CD4-positive, alpha-beta memory T cell (primary cell): ENCODE measurements at regions of chr13 and their contacts with region 1.

Region 1: DNA sequence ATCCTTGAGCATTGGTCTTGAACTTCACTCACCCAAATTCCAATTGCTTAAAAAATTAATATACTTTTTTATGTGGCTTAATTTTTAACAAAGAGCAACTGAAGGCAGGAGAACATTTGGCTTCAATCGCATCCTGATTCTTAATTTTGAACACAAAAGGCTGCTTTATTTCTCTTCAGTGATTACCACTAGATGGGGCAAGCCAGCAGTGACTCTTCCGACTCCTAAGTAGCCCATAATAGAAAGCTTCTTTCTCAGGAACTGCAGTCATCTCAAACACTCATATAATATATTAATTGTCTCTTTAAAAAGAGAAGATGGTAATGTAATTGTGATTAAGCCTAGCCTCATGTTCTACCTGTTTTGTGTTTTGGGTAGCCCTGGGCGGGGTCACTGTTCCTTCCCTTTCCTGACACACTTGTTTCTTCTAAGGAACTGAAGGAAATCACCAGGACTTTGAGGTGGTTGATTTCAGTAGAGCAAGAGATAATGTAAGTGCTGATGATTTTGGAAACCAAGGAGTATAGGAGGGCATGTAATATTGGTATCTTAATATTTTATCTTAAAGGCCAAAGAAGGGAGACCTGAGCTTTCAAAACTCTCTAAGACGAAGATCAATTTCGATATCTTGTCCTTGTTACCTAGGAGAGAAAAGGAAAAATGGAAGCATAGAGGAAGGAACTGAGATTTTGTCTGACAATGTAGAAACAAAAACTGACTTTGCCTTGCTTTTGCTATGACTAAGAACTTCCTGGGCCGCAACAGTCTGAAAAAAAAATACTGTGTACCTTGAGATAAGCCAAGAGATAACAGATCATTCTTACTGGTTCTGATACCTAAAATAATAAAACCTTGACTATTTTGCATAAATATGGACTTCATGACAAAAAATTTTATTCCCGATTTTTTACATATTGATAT is 73.1 kb downstream of the TNFSF13B start:
- DNase-seq: peak; percentile 18 to 68 (median 40)
- H3K4me3 ChIP-seq: peak overlapping the region in 1 of 2 donors; percentile 13
- H3K4me3 Mint-ChIP-seq: peak overlapping the region; percentile 36 to 89 (median 78)
- H3K27ac ChIP-seq: peak overlapping the region; percentile 15
- H3K27ac Mint-ChIP-seq: peak overlapping the region; percentile 51 to 95 (median 85)
- H3K4me1 ChIP-seq: peaks cover 56% of the 10 kb centered on the region
- H3K4me1 Mint-ChIP-seq: peaks cover 24 to 68% (median 44%) of the 10 kb centered on the region in 4 donors
- H3K27me3 ChIP-seq: no peaks in the 10 kb centered on the region
- H3K27me3 Mint-ChIP-seq: no peaks in the 10 kb centered on the region

Region 2: GRCh38 chr13:108227651-108228272 is 114.9 kb before region 1 on chr13:
- CTCF ChIA-PET with region 1: interaction called, 3 read pairs
- POLR2A ChIA-PET with region 1: no interaction called
- intact Hi-C with region 1: loop called (anchors 1 kb)
- DNase-seq: peak in 4 of 5 donors; percentile 41 to 56 (median 46)
- H3K4me3 ChIP-seq: no peak overlapping the region
- H3K4me3 Mint-ChIP-seq: no peak overlapping the region
- H3K27ac ChIP-seq: no peak overlapping the region
- H3K27ac Mint-ChIP-seq: peak overlapping the region in 1 of 7 donors; percentile 69
- H3K4me1 ChIP-seq: peaks cover 43% of the 10 kb centered on the region
- H3K4me1 Mint-ChIP-seq: peaks cover 41 to 74% (median 60%) of the 10 kb centered on the region in 4 donors
- H3K27me3 ChIP-seq: no peaks in the 10 kb centered on the region
- H3K27me3 Mint-ChIP-seq: no peaks in the 10 kb centered on the region

Region 3: DNA sequence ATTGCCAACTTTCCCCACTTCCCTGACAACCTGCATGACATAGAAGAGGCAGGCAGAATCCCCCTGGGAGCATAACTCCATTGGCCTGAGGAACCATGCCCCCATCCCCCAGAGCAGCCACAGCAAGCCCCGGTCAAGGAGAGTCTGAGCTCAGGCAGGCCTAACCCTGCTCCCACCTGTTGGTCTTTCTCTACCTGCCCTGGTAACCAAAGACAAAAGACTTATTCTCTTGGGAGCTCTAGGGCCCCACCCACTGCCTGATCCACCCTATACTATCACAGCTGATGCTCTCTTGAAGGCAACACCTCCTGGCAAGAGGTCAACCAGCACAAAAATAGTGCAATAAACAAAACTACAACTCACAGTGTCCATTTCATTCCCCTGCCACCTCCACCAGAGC is 13.8 kb before region 1 on chr13:
- CTCF ChIA-PET with region 1: interaction called, 13 read pairs
- POLR2A ChIA-PET with region 1: interaction called, 11 read pairs
- intact Hi-C with region 1: loop called (anchors 1 kb)
- DNase-seq: no peak
- H3K4me3 ChIP-seq: no peak overlapping the region
- H3K4me3 Mint-ChIP-seq: no peak overlapping the region
- H3K27ac ChIP-seq: no peak overlapping the region
- H3K27ac Mint-ChIP-seq: no peak overlapping the region
- H3K4me1 ChIP-seq: peaks cover 16% of the 10 kb centered on the region
- H3K4me1 Mint-ChIP-seq: peaks cover 10 to 42% (median 27%) of the 10 kb centered on the region in 4 donors
- H3K27me3 ChIP-seq: no peaks in the 10 kb centered on the region
- H3K27me3 Mint-ChIP-seq: no peaks in the 10 kb centered on the region

Region 4: DNA sequence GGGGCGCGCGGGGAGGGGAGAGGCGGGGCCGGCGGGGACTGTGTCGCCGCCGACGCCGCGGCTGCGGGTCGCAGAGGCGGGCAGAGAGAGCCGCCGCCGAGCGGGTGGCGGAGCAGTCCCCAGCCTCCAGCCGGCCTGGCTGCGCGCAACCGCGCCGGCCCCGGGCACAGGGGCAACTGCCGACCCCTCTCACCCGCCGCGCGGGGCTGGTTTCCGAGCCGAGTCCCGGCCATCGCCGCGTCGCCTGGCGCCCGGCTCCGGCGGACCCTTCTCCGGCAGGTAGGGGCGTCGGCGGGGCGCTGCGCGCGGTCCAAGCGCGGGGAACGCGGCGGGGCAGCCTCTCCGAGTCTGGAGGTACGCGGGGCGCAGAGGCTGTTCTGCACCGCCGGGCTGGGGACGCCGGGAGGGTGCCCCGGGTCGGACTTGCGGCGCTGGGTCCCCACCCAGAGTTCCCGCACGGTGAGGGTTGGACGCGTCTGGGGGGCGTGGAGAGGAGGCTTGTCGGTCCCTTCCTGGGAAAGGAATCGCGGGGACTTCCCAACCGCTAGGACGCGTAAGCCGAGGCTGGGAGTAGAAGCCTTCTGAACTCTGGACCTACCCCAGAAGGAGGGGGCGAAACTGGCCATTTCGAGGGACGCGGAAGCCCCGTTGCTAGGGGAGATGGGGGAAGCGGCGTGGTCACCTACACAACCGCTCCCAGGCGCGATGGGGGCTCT is 153.2 kb after region 1 on chr13:
- CTCF ChIA-PET with region 1: interaction called, 24 read pairs
- POLR2A ChIA-PET with region 1: interaction called, 25 read pairs
- intact Hi-C with region 1: loop called (anchors 1 kb)
- DNase-seq: peak in 4 of 5 donors; percentile 5 to 44 (median 8)
- H3K4me3 ChIP-seq: peak overlapping the region; percentile 47 to 56
- H3K4me3 Mint-ChIP-seq: peak overlapping the region; percentile 83 to 97 (median 90)
- H3K27ac ChIP-seq: no peak overlapping the region
- H3K27ac Mint-ChIP-seq: peak overlapping the region in 6 of 7 donors; percentile 25 to 89 (median 48)
- H3K4me1 ChIP-seq: peaks cover 20% of the 10 kb centered on the region
- H3K4me1 Mint-ChIP-seq: peaks cover 4 to 39% (median 24%) of the 10 kb centered on the region in 4 donors
- H3K27me3 ChIP-seq: peaks cover 7% of the 10 kb centered on the region
- H3K27me3 Mint-ChIP-seq: peaks cover 7 to 9% of the 10 kb centered on the region in 2 donors

Region 5: DNA sequence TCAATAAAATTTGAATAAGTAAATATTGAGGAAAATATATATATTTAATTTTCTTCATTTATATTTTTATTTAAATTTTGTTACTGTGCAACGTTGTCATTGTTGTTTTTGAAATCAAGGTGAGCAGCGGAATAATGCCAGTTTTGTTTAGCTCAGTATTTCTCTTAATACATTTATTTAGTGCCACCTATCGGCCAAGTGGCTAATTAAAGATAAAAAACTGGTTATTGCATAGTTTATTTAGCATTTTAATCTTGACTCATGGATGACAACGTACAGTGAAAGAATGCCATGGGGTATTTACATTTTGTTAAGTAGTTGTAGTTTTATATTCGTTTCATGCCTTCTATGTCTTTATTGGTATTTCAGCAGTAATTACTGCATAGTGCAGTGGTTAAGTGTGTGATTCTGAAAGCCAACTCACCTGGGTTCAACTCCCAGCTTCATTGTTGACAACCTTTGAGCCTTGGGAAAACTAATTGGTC is 552.6 kb after region 1 on chr13:
- CTCF ChIA-PET with region 1: interaction called, 5 read pairs
- POLR2A ChIA-PET with region 1: no interaction called
- intact Hi-C with region 1: loop called (anchors 1 kb)
- DNase-seq: peak in 4 of 5 donors; percentile 19 to 31 (median 26)
- H3K4me3 ChIP-seq: no peak overlapping the region
- H3K4me3 Mint-ChIP-seq: no peak overlapping the region
- H3K27ac ChIP-seq: no peak overlapping the region
- H3K27ac Mint-ChIP-seq: no peak overlapping the region
- H3K4me1 ChIP-seq: peaks cover 8% of the 10 kb centered on the region
- H3K4me1 Mint-ChIP-seq: peaks cover 5 to 14% (median 10%) of the 10 kb centered on the region in 4 donors
- H3K27me3 ChIP-seq: no peaks in the 10 kb centered on the region
- H3K27me3 Mint-ChIP-seq: peaks cover 0 to 1% of the 10 kb centered on the region in 2 donors